Spleen (tissue), 13 donors: ENCODE measurements at regions of chr12 and their contacts with region 1.

Region 1: DNA sequence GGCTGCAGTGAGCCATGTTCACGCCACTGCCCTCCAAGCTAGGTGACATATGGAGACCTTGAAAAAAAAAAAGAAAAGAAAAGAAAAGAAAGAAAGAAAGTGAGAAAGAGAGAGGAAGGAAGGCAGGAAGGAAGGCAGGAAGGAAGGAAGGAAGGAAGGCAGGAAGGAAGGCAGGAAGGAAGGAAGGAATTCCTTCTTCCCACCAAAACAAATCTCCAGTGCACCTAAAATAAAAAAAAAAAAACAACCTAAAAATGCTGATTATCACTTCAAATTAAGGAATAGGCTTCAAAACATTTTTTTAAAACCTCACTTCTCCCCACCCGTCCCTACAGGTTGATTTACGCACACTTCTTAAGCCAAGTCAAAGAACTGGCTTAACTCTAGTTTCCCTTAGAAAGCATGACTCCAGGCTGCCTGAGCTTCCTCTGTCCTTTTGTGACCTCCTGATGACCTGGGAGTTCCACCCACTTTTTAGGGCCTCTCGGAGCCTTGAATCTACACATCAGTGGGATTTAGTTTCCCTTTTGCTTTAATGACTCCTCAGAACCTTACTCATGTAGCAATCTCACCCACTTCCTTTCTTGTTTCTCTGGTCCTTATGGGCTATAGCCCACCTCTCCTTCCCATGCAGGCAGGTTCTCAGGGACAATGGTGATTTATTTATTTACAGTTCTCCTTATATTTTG is 18.6 kb downstream of the DUSP6 start:
- DNase-seq: no peak
- H3K4me3 ChIP-seq: no peak overlapping the region
- H3K27ac ChIP-seq: peak overlapping the region in 7 of 8 donors; percentile 39 to 69 (median 54)
- H3K4me1 ChIP-seq: peaks cover 3 to 24% (median 12%) of the 10 kb centered on the region in 6 donors
- H3K27me3 ChIP-seq: no peaks in the 10 kb centered on the region
- CTCF ChIP-seq: no peak
- POLR2A ChIP-seq: no peak

Region 2: GRCh38 chr12:89280833-89281538 is 52.7 kb before region 1 on chr12:
- intact Hi-C with region 1: loop called (anchors 10 kb)
- DNase-seq: no peak
- H3K4me3 ChIP-seq: no peak overlapping the region
- H3K27ac ChIP-seq: peak overlapping the region; percentile 52 to 82 (median 77)
- H3K4me1 ChIP-seq: peaks cover 6 to 51% (median 16%) of the 10 kb centered on the region in 6 donors
- H3K27me3 ChIP-seq: no peaks in the 10 kb centered on the region
- CTCF ChIP-seq: no peak
- POLR2A ChIP-seq: no peak